ENCODE measurements at regions of chr10 and their contacts with region 1.

Region 1: GRCh38 chr10:11255796-11256444 is 238.2 kb downstream of the CELF2 start:
- DNase-seq: no peak
- H3K4me3 ChIP-seq: no peak overlapping the region
- H3K27ac ChIP-seq: no peak overlapping the region
- H3K4me1 ChIP-seq: no peaks in the 10 kb centered on the region
- H3K27me3 ChIP-seq: no peaks in the 10 kb centered on the region
- CTCF ChIP-seq: no peak

Region 2: DNA sequence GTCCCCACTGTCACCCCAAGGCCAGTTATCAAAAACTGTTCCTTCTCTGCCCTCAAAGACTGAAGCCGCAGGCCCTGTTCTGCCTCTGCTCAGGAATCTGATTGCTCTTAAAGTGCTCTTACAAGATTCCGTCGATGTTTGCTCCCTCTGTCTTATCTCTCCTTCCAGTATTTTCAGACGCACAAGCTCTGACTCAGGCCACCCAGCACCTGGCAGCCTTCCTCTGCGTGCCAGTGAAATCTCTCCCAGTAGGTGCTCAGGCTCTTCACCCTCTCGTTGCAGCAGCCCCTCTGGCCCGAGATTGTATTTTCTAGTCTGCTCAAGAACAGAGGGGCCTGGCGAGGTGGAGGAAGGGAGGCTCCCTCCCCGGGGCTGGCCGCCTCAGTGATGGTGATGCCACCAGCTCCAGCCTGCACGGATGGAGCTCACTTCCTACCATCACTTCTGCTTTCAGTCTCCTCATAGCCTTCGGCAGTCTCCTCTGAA is 79.3 kb after region 1 on chr10:
- CTCF ChIA-PET with region 1: no interaction called
- dilution Hi-C with region 1: loop called (anchors 5 kb)
- in situ Hi-C with region 1: no loop called
- intact Hi-C with region 1: no loop called
- DNase-seq: no peak
- H3K4me3 ChIP-seq: no peak overlapping the region
- H3K27ac ChIP-seq: no peak overlapping the region
- H3K4me1 ChIP-seq: no peaks in the 10 kb centered on the region
- H3K27me3 ChIP-seq: no peaks in the 10 kb centered on the region
- CTCF ChIP-seq: no peak

Region 3: GRCh38 chr10:11515596-11516430 is 259.9 kb after region 1 on chr10:
- CTCF ChIA-PET with region 1: no interaction called
- dilution Hi-C with region 1: no loop called
- in situ Hi-C with region 1: no loop called
- intact Hi-C with region 1: no loop called
- DNase-seq: peak; percentile 56
- H3K4me3 ChIP-seq: no peak overlapping the region
- H3K27ac ChIP-seq: no peak overlapping the region
- H3K4me1 ChIP-seq: no peaks in the 10 kb centered on the region
- H3K27me3 ChIP-seq: no peaks in the 10 kb centered on the region
- CTCF ChIP-seq: peak; percentile 88

Region 4: GRCh38 chr10:12299222-12299965 is 1043.5 kb after region 1 on chr10:
- CTCF ChIA-PET with region 1: no interaction called
- dilution Hi-C with region 1: no loop called
- in situ Hi-C with region 1: no loop called
- intact Hi-C with region 1: no loop called
- DNase-seq: no peak
- H3K4me3 ChIP-seq: no peak overlapping the region
- H3K27ac ChIP-seq: no peak overlapping the region
- H3K4me1 ChIP-seq: no peaks in the 10 kb centered on the region
- H3K27me3 ChIP-seq: no peaks in the 10 kb centered on the region
- CTCF ChIP-seq: no peak